IMR-90 (cell line): ENCODE measurements at regions of chr4 and their contacts with region 1.

Region 1: DNA sequence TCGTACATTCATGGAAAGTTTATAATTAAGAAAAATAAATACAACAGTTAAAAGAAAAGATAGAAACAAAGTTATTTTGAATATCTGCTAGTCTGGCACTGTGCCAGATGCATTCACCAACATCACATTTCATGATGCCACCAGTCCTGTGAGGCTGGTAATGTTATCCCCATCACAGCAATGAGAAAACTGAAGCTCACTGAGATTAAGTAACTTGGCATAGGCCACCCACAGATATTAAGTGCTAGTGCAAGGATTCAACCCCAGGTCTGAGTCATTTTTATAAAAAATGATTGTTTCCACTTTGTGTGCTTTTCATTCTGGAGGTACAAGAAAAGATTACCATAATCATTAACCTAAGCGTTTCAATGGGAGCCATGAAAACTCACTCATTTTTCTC is 65.0 kb upstream of the IL15 start:
- DNase-seq: peak; percentile 60
- ATAC-seq: peak; percentile 55; the same call in 1 of the 2 replicates
- H3K4me3 ChIP-seq: no peak overlapping the region
- H3K27ac ChIP-seq: no peak overlapping the region
- H3K4me1 ChIP-seq: peaks cover 2% of the 10 kb centered on the region
- H3K27me3 ChIP-seq: no peaks in the 10 kb centered on the region
- CTCF ChIP-seq: no peak
- POLR2A ChIP-seq: no peak
- RAD21 ChIP-seq: no peak

Region 2: DNA sequence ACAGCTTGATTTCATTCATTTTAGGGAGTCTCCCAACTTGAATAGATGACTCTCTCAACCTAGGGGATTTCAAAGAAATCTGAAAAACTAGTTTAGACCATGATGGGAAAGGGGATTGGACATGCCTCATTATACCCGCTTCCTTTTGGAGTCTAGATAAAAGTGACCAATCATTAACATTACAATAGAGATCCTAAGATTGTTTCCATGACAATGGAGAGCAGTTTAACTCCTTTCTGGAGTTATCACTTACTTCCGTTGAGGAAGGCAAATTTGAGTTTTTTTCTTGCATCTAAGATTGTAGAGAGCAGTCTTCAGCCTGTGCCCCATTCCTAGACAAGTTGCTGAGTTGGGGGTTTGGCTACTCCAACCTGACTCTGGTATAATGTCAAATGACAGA is 53.7 kb after region 1 on chr4:
- CTCF ChIA-PET with region 1: no interaction called
- POLR2A ChIA-PET with region 1: no interaction called
- dilution Hi-C with region 1: no loop called
- in situ Hi-C with region 1: no loop called
- intact Hi-C with region 1: loop called (anchors 5 kb)
- DNase-seq: no peak
- ATAC-seq: no peak
- H3K4me3 ChIP-seq: no peak overlapping the region
- H3K27ac ChIP-seq: no peak overlapping the region
- H3K4me1 ChIP-seq: no peaks in the 10 kb centered on the region
- H3K27me3 ChIP-seq: no peaks in the 10 kb centered on the region
- CTCF ChIP-seq: no peak
- POLR2A ChIP-seq: no peak
- RAD21 ChIP-seq: no peak